ENCODE measurements at regions of chr5 and their contacts with region 1.

Region 1: DNA sequence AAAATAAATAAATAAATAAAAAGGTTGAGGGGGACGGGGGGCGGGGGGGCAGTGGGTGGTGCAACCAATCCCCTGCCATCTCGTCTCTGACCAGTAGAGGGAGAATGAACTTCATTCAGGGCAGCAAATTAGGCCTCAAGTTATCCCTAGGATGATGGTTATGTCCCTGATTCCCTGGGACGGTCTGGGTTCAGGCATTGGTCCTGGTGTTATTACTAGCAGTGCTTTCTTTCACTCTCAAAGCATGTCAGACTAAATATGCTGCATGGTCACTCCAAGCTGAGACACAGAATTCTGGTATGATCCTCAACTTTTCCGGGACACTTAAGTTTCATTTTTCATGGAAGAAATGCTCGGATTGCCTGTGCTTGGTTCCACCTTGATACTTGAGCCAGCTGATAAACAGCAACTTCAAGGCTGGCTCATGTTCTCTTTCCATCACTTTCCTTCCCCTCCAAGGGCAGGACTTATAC is 59.4 kb downstream of the DAP start:
- DNase-seq: peak in 1 of 2 experiments; percentile 73
- H3K4me3 ChIP-seq: no peak overlapping the region
- H3K27ac ChIP-seq: no peak overlapping the region
- H3K4me1 ChIP-seq: peaks cover 4 to 17% (median 8%) of the 10 kb centered on the region in 4 experiments
- H3K27me3 ChIP-seq: no peaks in the 10 kb centered on the region
- CTCF ChIP-seq: peak; percentile 48 to 67 (median 55)
- EP300 ChIP-seq: no peak
- POLR2A ChIP-seq: no peak
- RAD21 ChIP-seq: peak; percentile 55 to 56

Region 2: GRCh38 chr5:10599113-10599512 is 102.5 kb before region 1 on chr5:
- CTCF ChIA-PET with region 1: no interaction called
- POLR2A ChIA-PET with region 1: no interaction called
- DNase-seq: no peak
- H3K4me3 ChIP-seq: no peak overlapping the region
- H3K27ac ChIP-seq: no peak overlapping the region
- H3K4me1 ChIP-seq: peaks cover 0 to 6% (median 0%) of the 10 kb centered on the region in 4 experiments; a peak in 2 of 7 replicates
- H3K27me3 ChIP-seq: no peaks in the 10 kb centered on the region
- CTCF ChIP-seq: no peak
- EP300 ChIP-seq: no peak
- POLR2A ChIP-seq: no peak
- RAD21 ChIP-seq: no peak

Region 3: DNA sequence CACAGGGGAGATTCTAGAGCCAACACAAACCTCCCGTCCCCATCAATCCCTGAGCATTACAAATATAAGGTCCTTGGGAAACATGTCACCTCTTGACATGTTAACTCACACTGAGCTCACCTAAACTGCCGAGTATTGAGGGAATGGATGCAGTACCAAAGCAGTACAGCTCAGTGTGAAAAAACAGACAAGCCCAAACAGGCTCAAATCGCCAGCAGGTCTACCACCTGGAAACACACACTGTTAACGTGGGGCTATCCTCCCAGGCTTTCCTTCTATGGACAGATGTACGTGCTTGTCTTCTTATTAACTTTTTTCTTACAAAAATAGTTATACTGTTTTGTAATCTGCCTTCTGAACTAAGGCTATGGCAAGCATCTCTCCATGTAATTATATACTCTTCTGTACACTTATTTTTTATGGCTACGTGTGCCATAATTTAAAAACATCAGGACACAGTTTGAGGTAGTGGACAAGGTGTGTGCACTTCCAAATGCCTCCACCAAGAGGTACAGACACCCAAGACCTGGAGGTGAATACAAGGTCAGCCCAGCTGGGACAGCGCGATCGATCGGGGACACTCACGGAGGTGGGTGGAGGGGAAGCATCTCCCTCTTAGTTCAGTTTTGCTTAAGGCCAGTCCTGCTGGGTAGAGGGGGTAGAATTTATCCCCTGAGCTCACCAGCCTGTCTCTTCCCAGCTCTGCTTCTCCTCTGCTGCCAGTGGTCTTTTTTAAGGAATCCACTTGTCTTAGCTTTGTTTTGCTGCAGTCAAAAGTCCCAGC is 17.1 kb before region 1 on chr5:
- CTCF ChIA-PET with region 1: interaction called, 45 read pairs
- POLR2A ChIA-PET with region 1: interaction called, 6 read pairs
- DNase-seq: no peak
- H3K4me3 ChIP-seq: no peak overlapping the region
- H3K27ac ChIP-seq: no peak overlapping the region
- H3K4me1 ChIP-seq: peaks cover 0 to 11% (median 3%) of the 10 kb centered on the region in 4 experiments; a peak in 6 of 7 replicates
- H3K27me3 ChIP-seq: no peaks in the 10 kb centered on the region
- CTCF ChIP-seq: no peak
- EP300 ChIP-seq: no peak
- POLR2A ChIP-seq: no peak
- RAD21 ChIP-seq: no peak

Region 4: DNA sequence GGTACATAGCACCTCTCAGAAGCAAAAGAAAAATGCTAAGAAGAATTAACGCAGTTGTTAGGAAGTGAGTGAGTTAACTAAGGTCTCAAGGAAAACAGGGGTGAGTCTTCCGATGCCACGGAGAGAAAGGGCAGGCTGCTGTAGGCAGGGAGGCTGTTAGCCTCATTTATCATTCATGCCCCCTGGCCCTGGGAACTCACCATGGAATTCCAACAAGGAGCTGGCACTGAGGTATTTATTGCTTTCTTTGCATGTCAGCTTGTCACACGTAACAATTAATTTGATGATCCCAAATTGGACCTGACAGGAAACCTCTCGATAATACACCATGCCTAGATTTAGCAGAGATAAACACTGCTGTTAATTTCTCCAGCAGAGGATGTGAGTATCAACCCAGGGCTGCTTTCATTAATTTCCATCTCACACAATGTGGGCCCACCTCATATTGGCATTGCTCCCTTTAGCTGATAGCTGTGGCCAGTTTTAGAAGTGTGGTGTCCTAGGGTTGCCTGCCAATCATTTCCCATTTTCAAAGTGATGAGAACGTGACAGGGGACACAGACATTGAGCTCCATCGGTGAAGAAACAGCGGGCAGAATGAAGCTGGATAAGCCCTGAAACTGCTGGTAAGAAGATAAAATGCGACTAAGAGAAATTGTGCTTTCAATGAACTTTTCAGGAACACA is 14.1 kb after region 1 on chr5:
- CTCF ChIA-PET with region 1: interaction called, 13 read pairs
- POLR2A ChIA-PET with region 1: no interaction called
- DNase-seq: no peak
- H3K4me3 ChIP-seq: no peak overlapping the region
- H3K27ac ChIP-seq: no peak overlapping the region
- H3K4me1 ChIP-seq: no peaks in the 10 kb centered on the region
- H3K27me3 ChIP-seq: no peaks in the 10 kb centered on the region
- CTCF ChIP-seq: no peak
- EP300 ChIP-seq: no peak
- POLR2A ChIP-seq: no peak
- RAD21 ChIP-seq: no peak

Region 5: GRCh38 chr5:10746711-10747110 is 45.1 kb after region 1 on chr5:
- CTCF ChIA-PET with region 1: interaction called, 16 read pairs
- POLR2A ChIA-PET with region 1: no interaction called
- DNase-seq: no peak
- H3K4me3 ChIP-seq: no peak overlapping the region
- H3K27ac ChIP-seq: no peak overlapping the region
- H3K4me1 ChIP-seq: no peaks in the 10 kb centered on the region
- H3K27me3 ChIP-seq: no peaks in the 10 kb centered on the region
- CTCF ChIP-seq: no peak
- EP300 ChIP-seq: no peak
- POLR2A ChIP-seq: no peak
- RAD21 ChIP-seq: no peak

Region 6: GRCh38 chr5:10801931-10802659 is 100.5 kb after region 1 on chr5:
- CTCF ChIA-PET with region 1: interaction called, 10 read pairs
- POLR2A ChIA-PET with region 1: no interaction called
- DNase-seq: no peak
- H3K4me3 ChIP-seq: no peak overlapping the region; a peak in 1 of 8 replicates
- H3K27ac ChIP-seq: no peak overlapping the region
- H3K4me1 ChIP-seq: no peaks in the 10 kb centered on the region; a peak in 2 of 7 replicates
- H3K27me3 ChIP-seq: no peaks in the 10 kb centered on the region
- CTCF ChIP-seq: peak in 1 of 3 experiments; percentile 33; a peak in 1 of 4 replicates
- EP300 ChIP-seq: no peak
- POLR2A ChIP-seq: no peak
- RAD21 ChIP-seq: peak; percentile 7 to 35; a peak in 2 of 4 replicates

Region 7: GRCh38 chr5:10863763-10864383 is 162.3 kb after region 1 on chr5:
- CTCF ChIA-PET with region 1: interaction called, 38 read pairs
- POLR2A ChIA-PET with region 1: interaction called, 4 read pairs
- DNase-seq: peak; percentile 44 to 94
- H3K4me3 ChIP-seq: no peak overlapping the region
- H3K27ac ChIP-seq: no peak overlapping the region
- H3K4me1 ChIP-seq: no peaks in the 10 kb centered on the region
- H3K27me3 ChIP-seq: no peaks in the 10 kb centered on the region
- CTCF ChIP-seq: peak; percentile 78 to 89 (median 83)
- EP300 ChIP-seq: no peak
- POLR2A ChIP-seq: no peak
- RAD21 ChIP-seq: peak; percentile 80 to 84